Aorta (tissue), 5 donors: ENCODE measurements at regions of chr3 and their contacts with region 1.

Region 1: DNA sequence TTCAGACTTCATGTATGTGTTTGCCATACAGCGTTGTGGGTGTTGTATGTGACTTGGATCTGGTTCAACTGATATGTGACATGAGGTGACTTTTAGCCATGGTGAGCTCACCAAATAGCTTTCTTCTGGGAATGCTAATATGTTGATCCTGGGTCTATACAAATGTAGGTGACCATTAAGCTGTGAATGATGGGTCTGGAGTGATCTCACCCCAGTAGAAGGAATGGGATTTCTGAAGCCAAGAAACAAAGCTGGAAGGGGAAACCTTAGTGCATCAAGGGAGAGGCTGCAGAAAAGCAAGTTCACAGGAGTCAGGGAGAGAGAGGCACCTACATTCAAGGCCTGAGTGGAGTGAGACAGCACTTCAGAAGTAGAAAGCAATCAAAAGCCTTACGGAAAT is 421.0 kb upstream of the THRB start:
- DNase-seq: no peak
- ATAC-seq: no peak
- H3K4me3 ChIP-seq: no peak overlapping the region
- H3K27ac ChIP-seq: no peak overlapping the region
- H3K4me1 ChIP-seq: no peaks in the 10 kb centered on the region
- H3K27me3 ChIP-seq: peaks cover 0 to 1% of the 10 kb centered on the region in 2 donors

Region 2: DNA sequence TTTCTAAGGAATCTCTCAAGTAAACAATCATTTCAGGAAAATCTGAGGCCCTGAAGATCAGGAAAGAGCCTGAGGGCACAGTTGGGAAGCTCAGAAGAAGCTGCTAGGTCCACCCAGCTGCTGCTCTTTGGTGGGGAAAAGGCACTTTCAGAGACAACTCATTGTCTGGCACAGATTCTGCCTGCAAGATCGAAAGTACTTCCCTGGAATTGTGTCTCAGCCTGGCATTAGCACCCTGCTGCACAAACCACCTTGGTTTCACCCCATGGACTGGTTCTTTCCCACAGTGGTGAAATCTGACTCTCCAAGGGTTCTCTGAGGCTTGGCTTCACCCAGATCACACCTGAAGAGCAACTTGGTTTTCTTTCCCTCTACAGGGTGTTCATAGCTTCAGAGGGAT is 439.7 kb before region 1 on chr3:
- intact Hi-C with region 1: no loop called
- DNase-seq: no peak
- ATAC-seq: no peak
- H3K4me3 ChIP-seq: no peak overlapping the region
- H3K27ac ChIP-seq: peak overlapping the region in 1 of 2 donors; percentile 20
- H3K4me1 ChIP-seq: peaks cover 7 to 8% of the 10 kb centered on the region in 2 donors
- H3K27me3 ChIP-seq: no peaks in the 10 kb centered on the region

Region 3: GRCh38 chr3:25044762-25045710 is 129.4 kb after region 1 on chr3:
- intact Hi-C with region 1: no loop called
- DNase-seq: no peak
- ATAC-seq: no peak
- H3K4me3 ChIP-seq: no peak overlapping the region
- H3K27ac ChIP-seq: no peak overlapping the region
- H3K4me1 ChIP-seq: peaks cover 2 to 7% of the 10 kb centered on the region in 2 donors
- H3K27me3 ChIP-seq: no peaks in the 10 kb centered on the region

Region 4: GRCh38 chr3:25145176-25145575 is 229.5 kb after region 1 on chr3:
- intact Hi-C with region 1: loop called in 1 of 2 experiments (anchors 5 kb)
- DNase-seq: no peak
- ATAC-seq: no peak
- H3K4me3 ChIP-seq: no peak overlapping the region
- H3K27ac ChIP-seq: no peak overlapping the region
- H3K4me1 ChIP-seq: no peaks in the 10 kb centered on the region
- H3K27me3 ChIP-seq: no peaks in the 10 kb centered on the region